Activated CD4-positive, alpha-beta memory T cell treated with anti-CD3 and anti-CD28 coated beads, Interleukin-2, amount 10 ng/mL, durations not matched to agents 7 days and 5 days (primary cell): ENCODE measurements at regions of chr3 and their contacts with region 1.

Region 1: GRCh38 chr3:128617557-128618397 is 32.8 kb downstream of the RPN1 start:
- DNase-seq: peak; percentile 99
- H3K4me3 Mint-ChIP-seq: peak overlapping the region; percentile 94
- H3K27ac Mint-ChIP-seq: peak overlapping the region; percentile 88
- H3K4me1 Mint-ChIP-seq: peaks cover 51% of the 10 kb centered on the region
- H3K27me3 Mint-ChIP-seq: no peaks in the 10 kb centered on the region

Region 2: DNA sequence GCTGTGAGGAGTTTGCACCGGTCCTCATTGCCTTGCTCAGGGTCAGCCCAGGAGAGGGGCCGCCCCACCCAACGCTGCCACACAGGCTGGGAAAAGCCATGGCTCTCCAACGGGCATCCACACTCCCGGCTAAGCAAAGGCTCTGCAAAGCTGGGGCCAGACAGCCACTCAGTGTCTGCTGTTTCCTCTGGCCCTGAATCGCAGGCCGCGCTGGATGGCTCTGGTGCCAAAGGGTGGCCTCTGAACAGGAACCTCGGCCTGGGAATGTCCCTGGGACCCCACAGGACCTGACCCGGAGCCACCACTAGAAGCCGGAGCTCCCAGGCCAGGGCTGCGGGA is 10.1 kb before region 1 on chr3:
- CTCF ChIA-PET with region 1: interaction called, 12 read pairs
- POLR2A ChIA-PET with region 1: interaction called, 3 read pairs
- DNase-seq: no peak
- H3K4me3 Mint-ChIP-seq: no peak overlapping the region
- H3K27ac Mint-ChIP-seq: no peak overlapping the region
- H3K4me1 Mint-ChIP-seq: peaks cover 2% of the 10 kb centered on the region
- H3K27me3 Mint-ChIP-seq: peaks cover 2% of the 10 kb centered on the region

Region 3: GRCh38 chr3:128650096-128651050 is 32.6 kb after region 1 on chr3 and contains the start of gene RPN1:
- CTCF ChIA-PET with region 1: interaction called, 13 read pairs
- POLR2A ChIA-PET with region 1: interaction called, 16 read pairs
- DNase-seq: peak; percentile 96
- H3K4me3 Mint-ChIP-seq: peak within 1 kb of the TSS; percentile 85
- H3K27ac Mint-ChIP-seq: peak within 1 kb of the TSS; percentile 88
- H3K4me1 Mint-ChIP-seq: peaks cover 47% of the 10 kb centered on the region
- H3K27me3 Mint-ChIP-seq: no peaks in the 10 kb centered on the region
- total RNA-seq, gene RPN1: 190 to 192 TPM

Region 4: GRCh38 chr3:128655531-128655930 is 37.8 kb after region 1 on chr3:
- CTCF ChIA-PET with region 1: interaction called, 13 read pairs
- POLR2A ChIA-PET with region 1: interaction called, 16 read pairs
- DNase-seq: no peak
- H3K4me3 Mint-ChIP-seq: no peak overlapping the region
- H3K27ac Mint-ChIP-seq: no peak overlapping the region
- H3K4me1 Mint-ChIP-seq: peaks cover 15% of the 10 kb centered on the region
- H3K27me3 Mint-ChIP-seq: peaks cover 3% of the 10 kb centered on the region

Region 5: GRCh38 chr3:128787256-128788240 is 169.8 kb after region 1 on chr3:
- CTCF ChIA-PET with region 1: interaction called, 18 read pairs
- POLR2A ChIA-PET with region 1: no interaction called
- DNase-seq: peak; percentile 44
- H3K4me3 Mint-ChIP-seq: peak overlapping the region; percentile 60
- H3K27ac Mint-ChIP-seq: peak overlapping the region; percentile 87
- H3K4me1 Mint-ChIP-seq: peaks cover 74% of the 10 kb centered on the region
- H3K27me3 Mint-ChIP-seq: no peaks in the 10 kb centered on the region

Region 6: DNA sequence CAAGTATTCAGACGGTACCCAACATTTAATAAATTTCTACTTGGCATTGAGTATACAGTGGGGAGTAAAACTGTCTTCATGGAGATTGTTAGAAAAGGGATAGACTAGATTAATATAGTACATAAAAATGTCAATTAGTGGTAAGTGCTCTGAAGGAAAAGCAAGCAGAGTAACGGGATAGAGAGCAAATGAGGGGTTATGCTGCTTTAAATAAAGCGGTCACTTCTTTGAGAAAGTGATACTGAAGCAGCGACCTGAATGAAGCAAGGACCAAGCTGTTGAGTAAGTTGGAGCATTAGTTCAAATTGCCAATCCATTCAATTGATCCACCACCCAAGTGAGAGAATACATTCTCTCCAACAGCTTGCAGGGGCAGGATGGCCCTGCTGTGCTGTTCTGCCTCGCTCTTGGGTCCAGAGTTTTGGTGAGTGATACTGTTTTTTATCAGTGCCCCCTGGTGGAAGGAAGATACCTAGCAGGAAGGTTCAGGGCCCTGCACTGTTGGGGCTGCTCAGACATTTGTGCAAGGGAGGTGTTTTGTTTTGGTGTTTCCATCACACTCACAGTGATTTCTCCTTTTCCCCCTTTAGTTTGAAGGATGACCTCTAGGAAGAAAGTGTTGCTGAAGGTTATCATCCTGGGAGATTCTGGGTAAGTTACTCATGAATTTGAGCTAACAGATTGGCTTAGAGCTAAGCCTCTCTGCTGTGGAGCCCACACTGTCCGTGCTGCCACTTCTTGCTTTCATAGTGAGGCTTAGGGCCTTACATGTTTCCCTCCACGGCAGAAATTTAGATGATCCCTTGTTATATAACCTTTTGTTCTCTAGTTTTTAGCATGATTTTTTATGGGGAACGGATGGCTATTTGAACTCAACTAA is 177.2 kb after region 1 on chr3:
- CTCF ChIA-PET with region 1: interaction called, 24 read pairs
- POLR2A ChIA-PET with region 1: interaction called, 5 read pairs
- DNase-seq: peak; percentile 71
- H3K4me3 Mint-ChIP-seq: no peak overlapping the region
- H3K27ac Mint-ChIP-seq: peak overlapping the region; percentile 77
- H3K4me1 Mint-ChIP-seq: peaks cover 72% of the 10 kb centered on the region
- H3K27me3 Mint-ChIP-seq: no peaks in the 10 kb centered on the region

Region 7: DNA sequence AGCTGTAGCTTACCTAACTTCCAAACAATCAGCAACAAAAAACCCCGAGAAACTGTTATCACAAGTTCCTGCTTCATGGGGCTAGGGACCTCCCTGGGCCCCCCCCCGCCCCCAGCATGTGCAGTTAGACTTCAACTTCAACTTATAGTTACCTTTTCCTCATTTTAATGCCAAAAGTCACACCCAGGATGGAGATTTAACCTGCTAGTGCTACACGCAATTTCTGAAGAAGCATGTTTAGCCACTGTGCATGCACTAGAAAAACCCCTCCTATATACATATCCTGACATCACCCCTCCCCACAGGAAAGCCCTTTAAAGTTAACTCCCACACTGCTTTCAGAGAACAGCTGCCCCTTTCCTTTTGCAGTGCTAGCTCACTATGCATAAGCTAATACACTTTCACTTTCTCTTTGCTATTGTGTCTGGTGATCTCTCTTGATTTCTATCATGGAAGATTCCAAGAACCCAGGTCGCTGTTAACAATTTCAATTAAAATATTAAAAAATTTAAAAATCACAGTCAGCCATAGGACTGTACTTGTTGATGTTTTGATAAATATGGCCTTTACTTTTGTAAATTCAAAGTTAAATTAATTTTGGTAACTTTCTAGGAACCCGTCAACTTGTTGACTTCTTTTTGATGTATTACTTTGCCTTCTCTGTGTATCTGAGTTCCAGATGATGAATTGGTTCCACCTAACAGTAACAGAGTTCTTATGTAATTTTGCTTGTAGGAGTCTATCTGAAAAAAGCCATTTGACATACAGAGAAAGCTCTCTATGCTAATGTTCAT is 186.4 kb after region 1 on chr3:
- CTCF ChIA-PET with region 1: interaction called, 11 read pairs
- POLR2A ChIA-PET with region 1: interaction called, 6 read pairs
- DNase-seq: peak; percentile 70
- H3K4me3 Mint-ChIP-seq: peak overlapping the region; percentile 70
- H3K27ac Mint-ChIP-seq: peak overlapping the region; percentile 93
- H3K4me1 Mint-ChIP-seq: peaks cover 69% of the 10 kb centered on the region
- H3K27me3 Mint-ChIP-seq: no peaks in the 10 kb centered on the region

Region 8: GRCh38 chr3:128814519-128815317 is 196.9 kb after region 1 on chr3:
- CTCF ChIA-PET with region 1: no interaction called
- POLR2A ChIA-PET with region 1: no interaction called
- DNase-seq: no peak
- H3K4me3 Mint-ChIP-seq: no peak overlapping the region
- H3K27ac Mint-ChIP-seq: no peak overlapping the region
- H3K4me1 Mint-ChIP-seq: peaks cover 3% of the 10 kb centered on the region
- H3K27me3 Mint-ChIP-seq: no peaks in the 10 kb centered on the region